IMR-90 (cell line): ENCODE measurements at regions of chr1 and their contacts with region 1.

Region 1: DNA sequence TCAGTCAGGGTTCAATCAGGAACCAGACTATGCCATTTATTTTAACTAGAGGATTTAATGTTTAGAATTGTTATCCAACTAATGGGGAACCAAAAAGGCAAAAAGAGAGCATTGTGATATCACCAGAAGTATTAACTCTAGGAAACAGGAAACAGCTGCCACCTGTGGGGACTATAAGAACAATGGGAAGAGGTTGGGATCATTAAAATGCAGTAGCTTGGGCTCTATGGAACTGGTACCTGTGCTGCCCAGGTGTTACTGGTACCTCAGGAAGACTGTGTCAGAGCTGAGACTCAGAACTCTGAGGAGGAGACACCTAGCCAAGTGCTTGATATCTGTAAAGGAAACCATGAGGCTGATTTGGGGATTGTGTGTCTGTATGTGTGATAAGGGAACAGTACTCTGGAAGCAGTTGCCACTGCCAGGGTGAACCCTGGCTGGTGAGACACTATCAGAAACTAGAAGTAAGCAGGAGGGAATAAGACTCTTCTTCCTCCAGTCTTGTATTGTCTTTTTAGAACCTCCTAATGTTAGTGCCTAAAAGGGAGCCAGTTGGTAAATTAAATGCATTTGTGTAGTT is 49.4 kb downstream of the MAN1A2 start:
- DNase-seq: no peak
- ATAC-seq: no peak
- H3K4me3 ChIP-seq: no peak overlapping the region
- H3K27ac ChIP-seq: no peak overlapping the region
- H3K4me1 ChIP-seq: no peaks in the 10 kb centered on the region
- H3K27me3 ChIP-seq: no peaks in the 10 kb centered on the region
- CTCF ChIP-seq: no peak
- POLR2A ChIP-seq: no peak
- RAD21 ChIP-seq: no peak

Region 2: GRCh38 chr1:117401761-117402160 is 14.9 kb before region 1 on chr1:
- CTCF ChIA-PET with region 1: no interaction called
- POLR2A ChIA-PET with region 1: no interaction called
- dilution Hi-C with region 1: no loop called
- in situ Hi-C with region 1: no loop called
- intact Hi-C with region 1: loop called (anchors 2 kb)
- DNase-seq: no peak
- ATAC-seq: no peak
- H3K4me3 ChIP-seq: no peak overlapping the region
- H3K27ac ChIP-seq: no peak overlapping the region
- H3K4me1 ChIP-seq: no peaks in the 10 kb centered on the region
- H3K27me3 ChIP-seq: no peaks in the 10 kb centered on the region
- CTCF ChIP-seq: no peak
- POLR2A ChIP-seq: no peak
- RAD21 ChIP-seq: no peak